ENCODE measurements at regions of chr11 and their contacts with region 1.

Region 1: DNA sequence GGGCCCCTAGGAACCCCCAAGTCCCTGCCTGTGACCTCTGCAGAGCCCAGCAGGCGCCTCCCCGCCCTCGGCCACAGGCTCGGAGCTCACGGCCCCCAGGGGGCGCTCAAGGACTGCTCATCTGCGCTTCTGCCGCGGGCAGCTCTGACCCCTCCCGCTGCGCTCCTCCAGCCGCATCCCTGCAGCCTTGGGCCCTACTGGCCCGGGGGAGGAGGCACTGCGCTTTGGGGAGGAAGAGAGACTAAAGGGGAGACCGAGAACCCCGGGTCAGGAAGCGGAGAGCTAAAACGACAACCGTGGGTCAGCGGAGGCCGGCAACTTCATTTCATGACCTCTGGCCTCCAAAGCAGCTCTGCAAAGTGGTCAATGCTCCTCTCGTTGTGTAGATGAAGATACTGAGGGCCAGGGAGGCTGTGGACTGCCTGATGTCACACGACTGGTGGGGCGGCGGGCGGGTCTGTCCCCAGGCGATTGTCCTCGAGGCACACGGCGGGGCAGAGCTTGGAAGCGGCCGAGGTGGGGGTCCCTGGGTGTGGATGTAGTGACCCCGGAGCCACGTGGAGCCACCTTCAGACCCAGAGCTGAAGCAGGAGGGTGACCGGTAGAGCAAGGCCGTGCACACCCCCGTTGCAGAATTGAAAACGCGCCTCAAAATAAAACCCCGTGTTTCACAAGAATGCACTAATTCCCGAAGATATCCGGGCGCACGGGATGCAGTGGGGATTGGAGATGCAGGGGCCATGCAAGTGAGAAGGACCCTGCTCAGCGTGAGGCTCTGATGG is 2.7 kb upstream of the KRTAP5-6 start:
- DNase-seq: peak; percentile 82
- H3K27ac ChIP-seq: peak overlapping the region; percentile 76
- CTCF ChIP-seq: peak; percentile 77

Region 2: DNA sequence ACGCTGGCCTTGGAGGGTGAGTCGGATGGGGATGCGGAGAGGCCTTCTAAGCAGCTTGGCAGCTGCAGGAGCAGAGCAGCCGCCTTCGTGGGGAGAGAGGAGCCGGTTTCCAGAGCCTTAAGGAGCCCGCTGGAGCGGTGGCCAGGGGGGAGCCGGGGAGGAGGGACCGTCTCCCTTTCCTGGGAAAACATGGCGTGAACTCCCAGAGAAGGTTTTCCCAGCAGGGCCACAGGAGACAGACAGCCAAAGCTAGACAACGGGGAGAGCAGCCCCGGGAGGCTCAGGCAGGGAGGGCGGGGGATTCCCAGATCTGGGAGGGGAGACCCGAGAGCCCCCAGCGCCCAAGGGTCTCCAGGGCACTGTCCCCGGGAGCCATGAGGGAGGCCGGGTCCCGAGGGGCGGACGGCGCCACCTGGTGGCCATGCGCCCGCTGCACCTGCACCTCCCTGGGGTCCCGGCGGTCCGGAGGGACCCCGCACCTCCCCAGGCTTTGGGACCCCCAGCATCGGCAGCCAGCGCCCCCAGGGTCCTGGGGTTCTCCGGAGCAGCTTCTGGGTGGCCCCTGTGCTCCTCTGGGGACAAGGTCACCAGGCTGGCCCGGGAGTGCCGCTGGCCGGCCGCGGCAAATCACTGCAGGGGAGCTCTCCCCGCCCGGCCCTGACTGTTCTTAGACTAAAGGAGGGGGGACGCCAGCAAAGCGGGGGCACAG is 138.1 kb after region 1 on chr11:
- CTCF ChIA-PET with region 1: interaction called, 85 read pairs
- POLR2A ChIA-PET with region 1: no interaction called
- DNase-seq: no peak
- H3K27ac ChIP-seq: peak overlapping the region; percentile 97
- CTCF ChIP-seq: peak; percentile 92

Region 3: GRCh38 chr11:1882519-1883238 is 188.4 kb after region 1 on chr11:
- CTCF ChIA-PET with region 1: interaction called, 27 read pairs
- POLR2A ChIA-PET with region 1: no interaction called
- DNase-seq: peak; percentile 82
- H3K27ac ChIP-seq: peak overlapping the region; percentile 100
- CTCF ChIP-seq: peak; percentile 88

Region 4: DNA sequence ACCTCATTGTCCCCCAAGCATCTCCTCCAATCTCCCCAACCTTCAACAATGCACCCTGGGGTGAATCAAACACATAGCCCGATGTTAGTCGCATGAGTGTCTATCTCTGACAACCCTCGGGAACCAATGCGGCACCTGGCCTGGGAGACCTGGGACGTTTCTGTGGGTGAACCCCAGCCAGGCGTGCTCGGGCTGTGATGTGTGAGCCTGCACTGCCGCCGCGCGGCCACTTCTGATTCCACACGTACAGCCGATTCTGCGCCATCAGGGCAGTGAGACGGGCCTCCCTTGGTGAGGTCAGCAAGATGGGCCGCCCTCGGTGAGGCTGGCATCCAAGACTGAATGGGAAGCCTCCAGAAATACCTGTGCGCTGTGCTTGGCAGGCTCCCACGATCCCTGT is 308.6 kb after region 1 on chr11:
- CTCF ChIA-PET with region 1: interaction called, 10 read pairs
- POLR2A ChIA-PET with region 1: no interaction called
- DNase-seq: no peak
- H3K27ac ChIP-seq: no peak overlapping the region
- CTCF ChIP-seq: no peak